Sigmoid colon (tissue), 7 donors: ENCODE measurements at regions of chr9 and their contacts with region 1.

Region 1: DNA sequence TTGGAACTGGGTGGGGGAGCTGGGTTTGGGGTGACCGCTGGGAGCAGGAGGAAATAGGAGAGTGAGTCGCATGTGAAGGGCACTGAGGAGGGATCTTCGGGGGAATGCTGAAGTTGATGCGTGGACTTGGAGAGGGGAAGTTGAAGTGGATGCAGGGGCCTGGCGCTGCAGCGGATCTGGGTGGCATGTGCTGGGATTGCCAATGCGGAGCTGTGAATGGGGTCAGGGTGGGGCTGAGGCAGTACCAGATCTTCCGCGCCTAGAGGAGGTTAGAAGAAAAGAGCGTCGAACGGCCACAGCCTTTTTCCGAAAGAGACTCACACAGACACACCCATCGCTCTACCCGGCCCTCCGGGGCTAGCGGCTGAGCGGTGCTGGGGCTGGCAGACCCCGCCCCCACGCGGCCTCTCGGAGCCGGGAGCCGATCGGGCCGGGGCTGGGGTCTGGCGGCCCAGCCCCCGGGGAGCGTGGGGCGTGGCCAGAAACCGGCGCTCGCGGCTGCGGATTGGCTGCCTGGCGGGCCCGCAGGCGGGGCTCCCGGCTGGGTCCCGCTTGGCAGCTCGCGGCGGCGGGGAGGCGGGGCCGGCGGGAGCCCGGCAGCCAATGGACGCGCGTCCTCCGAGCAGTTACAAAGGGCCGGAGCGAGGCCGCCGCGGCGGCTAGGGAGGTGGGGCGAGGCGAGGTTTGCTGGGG is at the start of gene TGFBR1:
- DNase-seq: peak; percentile 96
- H3K4me3 ChIP-seq: peak within 1 kb of the TSS; percentile 85 to 98 (median 90)
- H3K27ac ChIP-seq: peak within 1 kb of the TSS; percentile 92 to 95 (median 93)
- H3K4me1 ChIP-seq: peaks cover 0 to 59% (median 49%) of the 10 kb centered on the region in 4 donors
- H3K27me3 ChIP-seq: no peaks in the 10 kb centered on the region
- CTCF ChIP-seq: peak in 1 of 4 experiments; percentile 11
- EP300 ChIP-seq: peak in 1 of 4 donors; percentile 14
- POLR2A ChIP-seq: peak; percentile 57 to 68
- total RNA-seq, gene TGFBR1: 48.4 to 84.3 (median 62.5) TPM

Region 2: DNA sequence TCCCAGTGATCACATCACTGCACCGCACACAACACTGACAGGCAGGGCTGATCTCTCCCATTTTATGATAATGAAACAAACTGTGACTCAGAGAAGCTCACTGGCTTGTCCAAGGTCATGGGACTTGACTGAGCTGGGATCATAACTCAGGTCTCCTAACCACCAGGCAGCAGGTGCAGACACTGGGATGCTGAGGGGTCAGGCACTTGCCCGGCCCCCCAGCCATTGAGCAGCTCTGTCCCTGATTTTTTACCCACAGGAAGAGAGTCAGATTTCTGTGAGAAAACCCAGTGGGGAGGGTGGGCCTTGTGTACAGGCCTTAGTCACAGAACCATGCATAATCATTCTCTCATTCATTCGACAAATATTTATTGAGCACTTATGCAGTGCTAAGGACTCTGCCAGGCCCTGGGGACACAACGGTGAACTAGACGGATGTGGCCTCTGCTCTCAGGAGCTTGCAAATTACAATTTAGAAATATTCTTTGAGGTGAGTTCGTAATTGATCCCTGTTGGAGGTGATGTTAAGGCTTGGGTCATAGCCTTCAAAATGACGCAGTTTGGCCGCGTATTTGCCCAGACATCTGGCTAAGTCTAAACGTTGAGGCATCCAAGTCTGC is 54.2 kb before region 1 on chr9:
- intact Hi-C with region 1: loop called (anchors 5 kb)
- DNase-seq: no peak
- H3K4me3 ChIP-seq: no peak overlapping the region
- H3K27ac ChIP-seq: peak overlapping the region in 3 of 4 donors; percentile 72 to 88 (median 87)
- H3K4me1 ChIP-seq: peaks cover 0 to 59% (median 45%) of the 10 kb centered on the region in 4 donors
- H3K27me3 ChIP-seq: no peaks in the 10 kb centered on the region
- CTCF ChIP-seq: no peak
- EP300 ChIP-seq: no peak
- POLR2A ChIP-seq: no peak

Region 3: GRCh38 chr9:99076483-99077171 is 28.0 kb before region 1 on chr9:
- intact Hi-C with region 1: no loop called
- DNase-seq: peak; percentile 48
- H3K4me3 ChIP-seq: no peak overlapping the region
- H3K27ac ChIP-seq: no peak overlapping the region
- H3K4me1 ChIP-seq: peaks cover 0 to 8% (median 5%) of the 10 kb centered on the region in 4 donors
- H3K27me3 ChIP-seq: no peaks in the 10 kb centered on the region
- CTCF ChIP-seq: no peak
- EP300 ChIP-seq: no peak
- POLR2A ChIP-seq: no peak